ENCODE measurements at regions of chr7 and their contacts with region 1.

Region 1: DNA sequence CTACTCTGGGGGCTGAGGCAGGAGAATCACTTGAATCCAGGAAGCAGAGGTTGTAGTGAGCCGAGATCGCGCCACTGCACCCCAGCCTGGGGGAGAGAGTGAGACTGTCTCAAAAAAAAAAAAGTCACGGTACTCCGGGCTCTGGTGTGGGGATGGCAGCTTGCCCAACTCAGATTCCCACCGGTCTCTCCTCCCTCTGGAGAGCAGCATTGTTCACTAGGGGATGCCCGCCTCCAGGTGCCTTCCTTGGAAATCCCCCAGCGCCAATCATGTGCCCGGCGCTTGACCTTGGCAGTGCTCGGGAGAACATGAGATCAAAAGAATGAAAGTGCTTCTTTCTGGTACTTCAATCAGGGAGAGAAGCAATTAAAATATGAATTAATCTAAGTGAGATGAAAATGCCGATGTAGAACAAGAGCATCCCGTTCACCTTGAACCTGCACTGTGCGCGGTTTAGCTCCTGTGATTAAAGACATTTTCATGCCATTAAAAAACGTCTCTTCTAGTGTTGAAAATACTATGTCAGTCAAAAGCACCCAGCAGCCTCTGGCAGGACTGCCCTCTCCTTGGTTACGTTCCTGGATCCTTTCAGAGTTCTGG is 1127.3 kb upstream of the AUTS2 start:
- DNase-seq: no peak
- H3K4me3 ChIP-seq: no peak overlapping the region
- H3K27me3 ChIP-seq: no peaks in the 10 kb centered on the region
- CTCF ChIP-seq: no peak

Region 2: DNA sequence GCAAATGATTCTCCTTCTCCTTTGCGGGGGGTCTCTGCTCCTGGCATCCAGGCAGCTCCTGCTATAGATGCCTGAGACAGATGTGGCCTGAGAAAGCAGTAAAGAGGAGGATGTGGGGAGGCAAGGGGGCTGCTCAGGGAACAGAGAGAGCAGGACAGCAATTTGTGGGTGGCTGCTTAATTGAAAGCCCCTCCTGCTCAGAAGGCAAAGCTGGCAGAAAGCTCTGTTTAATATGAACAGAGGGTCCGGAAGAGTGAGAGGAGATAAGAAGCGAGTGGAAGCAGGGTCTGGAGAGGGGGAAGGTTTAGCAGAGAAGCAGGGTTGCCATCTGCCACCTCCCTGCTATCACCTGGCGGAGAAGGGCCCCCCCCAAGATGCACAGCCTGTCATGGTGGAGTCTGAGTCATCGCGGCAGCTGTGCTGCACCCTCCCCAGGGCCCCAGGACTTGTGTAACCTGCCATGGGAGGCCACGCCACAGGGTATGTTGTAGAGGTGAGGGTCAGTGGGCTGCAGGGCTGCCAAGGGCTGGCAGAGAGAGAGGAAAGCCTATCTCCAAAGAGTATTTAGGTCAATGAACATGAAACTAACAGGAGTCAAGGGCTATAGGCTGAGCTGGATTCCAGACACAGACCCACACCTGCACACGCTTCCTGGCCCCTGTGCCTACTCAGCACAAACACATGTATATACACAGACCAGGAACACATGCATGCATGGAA is 17.6 kb after region 1 on chr7:
- CTCF ChIA-PET with region 1: no interaction called
- POLR2A ChIA-PET with region 1: no interaction called
- DNase-seq: no peak
- H3K4me3 ChIP-seq: no peak overlapping the region
- H3K27me3 ChIP-seq: no peaks in the 10 kb centered on the region
- CTCF ChIP-seq: no peak

Region 3: GRCh38 chr7:68529225-68529624 is 58.3 kb after region 1 on chr7:
- CTCF ChIA-PET with region 1: no interaction called
- POLR2A ChIA-PET with region 1: interaction called, 11 read pairs
- DNase-seq: no peak
- H3K4me3 ChIP-seq: no peak overlapping the region
- H3K27me3 ChIP-seq: no peaks in the 10 kb centered on the region
- CTCF ChIP-seq: no peak

Measured in BJ (cell line).